Aorta (tissue), 5 donors: ENCODE measurements at regions of chr3 and their contacts with region 1.

Region 1: DNA sequence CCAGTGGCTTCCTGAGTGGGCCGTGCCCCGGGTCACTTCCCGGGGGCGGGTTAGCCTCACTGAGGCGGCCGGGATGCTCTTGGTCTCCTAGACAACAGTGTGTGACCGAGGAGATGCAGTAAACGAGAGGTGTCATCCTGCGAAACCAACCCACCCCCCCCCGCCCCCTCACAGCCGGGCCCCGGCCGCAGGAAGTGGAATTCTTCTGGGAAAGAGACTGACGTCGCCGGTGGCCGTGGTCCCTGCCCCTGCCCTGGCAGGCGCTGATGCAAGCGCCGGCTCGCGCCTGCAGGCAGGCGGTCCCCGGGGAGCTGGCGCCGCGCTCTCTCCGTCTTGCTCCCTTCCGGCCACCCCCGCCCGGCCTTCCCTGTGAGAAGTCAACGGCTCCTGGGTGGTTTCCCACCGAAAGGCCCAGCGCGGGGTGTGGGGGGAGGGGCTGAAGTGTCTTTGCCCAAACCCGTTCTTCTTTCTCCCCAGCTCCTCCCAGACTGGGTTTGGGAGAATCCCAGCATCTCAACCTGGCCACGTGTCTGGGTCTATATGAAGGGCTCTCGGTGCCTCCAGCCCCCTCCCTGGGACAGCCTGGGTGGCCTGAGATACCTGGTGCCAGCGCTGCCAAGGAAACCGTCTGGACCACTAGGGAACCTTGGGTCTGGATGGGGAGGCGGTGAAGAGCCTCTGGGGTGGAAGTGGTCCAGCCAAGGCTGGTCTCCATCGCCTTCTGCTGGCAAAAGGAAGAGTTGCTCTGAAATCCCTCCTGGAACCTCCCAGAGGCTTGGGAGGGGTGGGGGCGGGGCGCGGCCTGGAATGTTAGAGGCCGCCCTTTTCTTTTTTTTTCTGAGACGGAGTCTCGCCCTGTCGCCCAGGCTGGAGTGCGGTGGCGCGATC is 47.3 kb downstream of the BHLHE40 start:
- DNase-seq: peak; percentile 97 to 98
- ATAC-seq: peak; percentile 95
- H3K4me3 ChIP-seq: peak overlapping the region in 1 of 2 donors; percentile 15
- H3K27ac ChIP-seq: peak overlapping the region; percentile 50 to 60
- H3K4me1 ChIP-seq: no peaks in the 10 kb centered on the region
- H3K27me3 ChIP-seq: no peaks in the 10 kb centered on the region

Region 2: DNA sequence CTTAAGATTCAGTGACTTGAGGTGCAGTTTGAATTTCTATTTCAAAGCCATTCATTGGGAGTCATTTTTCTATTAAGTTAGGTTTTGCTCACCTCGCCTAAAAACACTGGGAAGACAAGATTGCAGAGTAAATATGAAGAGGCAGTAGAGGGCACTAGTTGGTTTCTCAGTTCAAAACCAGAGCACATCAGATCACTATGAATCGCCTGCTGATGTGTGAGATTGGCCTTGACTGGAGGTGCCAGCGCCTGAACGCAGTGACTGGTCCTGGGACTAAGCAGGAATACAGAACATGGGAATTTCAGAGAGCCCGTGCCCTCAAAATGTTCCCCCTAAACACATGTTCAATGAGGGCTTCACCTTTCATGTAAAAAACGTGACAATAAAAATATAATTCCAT is 304.5 kb before region 1 on chr3:
- intact Hi-C with region 1: loop called in 1 of 2 experiments (anchors 2 kb)
- DNase-seq: peak in 1 of 2 donors; percentile 56
- ATAC-seq: peak; percentile 69
- H3K4me3 ChIP-seq: no peak overlapping the region
- H3K27ac ChIP-seq: peak overlapping the region in 1 of 2 donors; percentile 64
- H3K4me1 ChIP-seq: peaks cover 0 to 2% of the 10 kb centered on the region in 2 donors
- H3K27me3 ChIP-seq: no peaks in the 10 kb centered on the region

Region 3: DNA sequence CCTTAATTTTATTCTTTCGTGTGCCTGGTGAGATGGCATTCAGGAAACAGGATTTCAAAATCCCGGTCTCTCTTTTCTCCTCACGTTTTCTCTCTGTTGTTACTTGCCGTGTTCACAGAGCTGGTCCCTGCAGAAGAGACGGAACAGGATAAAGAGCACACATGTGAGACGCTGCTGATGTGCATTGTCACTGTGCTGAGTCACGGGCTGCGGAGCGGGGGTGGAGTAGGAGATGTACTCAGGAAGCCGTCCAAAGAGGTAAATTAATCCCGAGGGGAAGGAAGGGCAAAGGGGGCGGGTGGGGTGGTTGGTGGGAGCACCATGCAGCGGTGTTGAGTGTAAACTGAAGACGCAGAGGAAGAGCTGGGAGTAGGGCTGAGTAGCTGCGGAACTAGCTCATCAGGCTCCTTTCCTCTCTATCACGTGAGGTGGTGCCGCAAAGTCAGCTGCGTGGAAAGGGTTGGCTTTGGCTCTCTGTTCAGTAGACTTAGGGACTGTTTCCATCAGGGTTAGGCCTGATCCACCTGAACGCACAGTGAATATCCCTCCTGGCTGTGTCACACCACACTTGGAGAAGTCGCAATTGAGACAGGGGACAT is 212.2 kb before region 1 on chr3:
- intact Hi-C with region 1: loop called in 1 of 2 experiments (anchors 5 kb)
- DNase-seq: peak in 1 of 2 donors; percentile 57
- ATAC-seq: peak; percentile 62
- H3K4me3 ChIP-seq: no peak overlapping the region
- H3K27ac ChIP-seq: no peak overlapping the region
- H3K4me1 ChIP-seq: no peaks in the 10 kb centered on the region
- H3K27me3 ChIP-seq: no peaks in the 10 kb centered on the region

Region 4: GRCh38 chr3:4978204-4978965 is 48.2 kb before region 1 on chr3:
- intact Hi-C with region 1: loop called in 1 of 2 experiments (anchors 1 kb)
- DNase-seq: peak; percentile 99 to 100
- ATAC-seq: peak; percentile 90
- H3K4me3 ChIP-seq: peak overlapping the region; percentile 42 to 50
- H3K27ac ChIP-seq: peak overlapping the region; percentile 87 to 98
- H3K4me1 ChIP-seq: no peaks in the 10 kb centered on the region
- H3K27me3 ChIP-seq: no peaks in the 10 kb centered on the region

Region 5: GRCh38 chr3:4994823-4995499 is 31.6 kb before region 1 on chr3:
- intact Hi-C with region 1: loop called (anchors 2 kb)
- DNase-seq: peak; percentile 93 to 95
- ATAC-seq: peak; percentile 93
- H3K4me3 ChIP-seq: no peak overlapping the region
- H3K27ac ChIP-seq: peak overlapping the region; percentile 44 to 89
- H3K4me1 ChIP-seq: no peaks in the 10 kb centered on the region
- H3K27me3 ChIP-seq: no peaks in the 10 kb centered on the region

Region 6: DNA sequence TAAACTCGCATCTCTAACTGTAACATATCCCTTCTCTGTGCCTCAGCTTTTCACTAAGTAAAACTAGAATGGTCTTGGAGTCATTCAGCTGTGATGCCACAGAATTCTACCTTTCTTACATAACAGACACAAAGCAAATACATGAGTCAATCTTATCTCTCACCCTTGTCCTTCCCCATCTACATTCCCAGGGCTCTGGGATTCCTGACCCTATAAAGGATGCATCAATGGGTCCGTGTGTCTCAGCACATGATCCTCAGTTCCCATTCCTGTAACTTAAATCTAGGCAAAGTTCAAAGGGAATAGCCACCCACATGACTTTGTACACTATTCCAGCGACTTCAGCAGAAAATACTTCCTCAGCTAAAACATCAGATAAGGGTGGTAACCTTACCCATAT is 83.8 kb after region 1 on chr3:
- intact Hi-C with region 1: no loop called
- DNase-seq: no peak
- ATAC-seq: no peak
- H3K4me3 ChIP-seq: no peak overlapping the region
- H3K27ac ChIP-seq: no peak overlapping the region
- H3K4me1 ChIP-seq: no peaks in the 10 kb centered on the region
- H3K27me3 ChIP-seq: no peaks in the 10 kb centered on the region